GM10248 (cell line): ENCODE measurements at regions of chr2 and their contacts with region 1.

Region 1: GRCh38 chr2:121471532-121472469 is 58.9 kb upstream of the RNU4ATAC start:
- DNase-seq: no peak
- CTCF ChIP-seq: no peak

Region 2: GRCh38 chr2:121459291-121459690 is 12.5 kb before region 1 on chr2:
- CTCF ChIA-PET with region 1: interaction called, 12 read pairs
- POLR2A ChIA-PET with region 1: no interaction called
- DNase-seq: no peak
- CTCF ChIP-seq: no peak